Activated T-helper 2 cell treated with anti-CD3 and anti-CD28 coated beads, Interferon-gamma antibody, Interleukin-2, Interleukin-4, amounts not matched to agents 10 μg/mL and 5 μg/mL and 100 μg/mL, durations not matched to agents 14 hours and 24 hours and 36 hours (primary cell): ENCODE measurements at regions of chr5 and their contacts with region 1.

Region 1: GRCh38 chr5:150357326-150358260 is at the start of gene TCOF1:
- DNase-seq: peak; percentile 96
- H3K4me3 Mint-ChIP-seq: peak within 1 kb of the TSS; percentile 87
- H3K27ac Mint-ChIP-seq: peak within 1 kb of the TSS; percentile 85
- H3K4me1 Mint-ChIP-seq: peaks cover 32% of the 10 kb centered on the region
- H3K27me3 Mint-ChIP-seq: peaks cover 4% of the 10 kb centered on the region
- total RNA-seq, gene TCOF1: 95.8 and 98.2 TPM in 2 replicates

Region 2: GRCh38 chr5:150175076-150175935 is 182.3 kb before region 1 on chr5:
- intact Hi-C with region 1: no loop called
- DNase-seq: no peak
- H3K4me3 Mint-ChIP-seq: no peak overlapping the region
- H3K27ac Mint-ChIP-seq: no peak overlapping the region
- H3K4me1 Mint-ChIP-seq: no peaks in the 10 kb centered on the region
- H3K27me3 Mint-ChIP-seq: peaks cover 8% of the 10 kb centered on the region

Region 3: GRCh38 chr5:150412319-150413175 is 55.0 kb after region 1 on chr5 and contains the start of gene CD74:
- intact Hi-C with region 1: loop called (anchors 1 kb)
- DNase-seq: peak; percentile 90
- H3K4me3 Mint-ChIP-seq: peak within 1 kb of the TSS; percentile 88
- H3K27ac Mint-ChIP-seq: peak within 1 kb of the TSS; percentile 94
- H3K4me1 Mint-ChIP-seq: peaks cover 27% of the 10 kb centered on the region
- H3K27me3 Mint-ChIP-seq: no peaks in the 10 kb centered on the region
- total RNA-seq, gene CD74: 445 and 452 TPM in 2 replicates